ENCODE measurements at regions of chr4 and their contacts with region 1.

Region 1: DNA sequence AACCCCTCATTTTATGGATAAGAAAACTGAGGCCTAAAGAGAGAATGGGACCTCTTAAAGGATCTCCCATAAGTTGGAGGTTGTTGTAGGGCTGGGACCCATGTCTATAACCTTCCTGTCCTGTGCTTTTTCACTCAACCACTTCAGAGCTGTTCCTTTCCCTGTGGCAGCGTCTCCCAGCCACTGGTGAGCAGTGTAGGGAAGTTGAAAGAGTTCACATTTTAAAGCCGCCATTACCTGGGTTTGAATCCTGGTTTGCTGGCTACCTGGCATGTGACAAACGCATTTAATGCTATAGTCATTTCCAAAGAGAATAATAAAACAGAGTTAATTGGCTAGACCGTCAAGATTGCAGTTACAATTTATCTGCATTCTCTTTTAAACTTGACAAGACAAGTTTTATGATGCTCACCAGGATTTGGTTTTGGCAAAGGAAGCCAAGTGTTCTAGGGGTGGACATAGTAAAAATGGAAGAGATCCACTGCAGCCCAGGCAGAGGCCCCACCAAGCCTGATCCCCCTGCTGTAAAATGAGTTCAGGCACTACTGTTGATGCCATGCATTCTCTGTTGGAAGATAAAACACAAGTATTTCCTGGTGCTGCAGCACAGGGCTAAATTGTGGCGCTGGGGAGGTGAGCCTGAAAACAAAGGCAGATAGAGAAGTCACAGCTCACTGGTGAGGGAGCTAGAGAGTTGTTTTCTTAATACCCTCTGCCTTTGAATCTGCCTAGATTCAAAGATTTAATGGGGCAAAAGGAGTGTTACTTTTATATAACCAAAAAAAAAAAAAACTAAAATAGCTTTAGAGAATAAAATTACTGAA is 218.7 kb downstream of the NWD2 start:
- DNase-seq: no peak
- ATAC-seq: no peak
- H3K4me3 ChIP-seq: no peak overlapping the region
- H3K27ac ChIP-seq: no peak overlapping the region
- H3K4me1 ChIP-seq: peaks cover 40% of the 10 kb centered on the region
- H3K27me3 ChIP-seq: no peaks in the 10 kb centered on the region
- CTCF ChIP-seq: no peak
- POLR2A ChIP-seq: no peak

Region 2: DNA sequence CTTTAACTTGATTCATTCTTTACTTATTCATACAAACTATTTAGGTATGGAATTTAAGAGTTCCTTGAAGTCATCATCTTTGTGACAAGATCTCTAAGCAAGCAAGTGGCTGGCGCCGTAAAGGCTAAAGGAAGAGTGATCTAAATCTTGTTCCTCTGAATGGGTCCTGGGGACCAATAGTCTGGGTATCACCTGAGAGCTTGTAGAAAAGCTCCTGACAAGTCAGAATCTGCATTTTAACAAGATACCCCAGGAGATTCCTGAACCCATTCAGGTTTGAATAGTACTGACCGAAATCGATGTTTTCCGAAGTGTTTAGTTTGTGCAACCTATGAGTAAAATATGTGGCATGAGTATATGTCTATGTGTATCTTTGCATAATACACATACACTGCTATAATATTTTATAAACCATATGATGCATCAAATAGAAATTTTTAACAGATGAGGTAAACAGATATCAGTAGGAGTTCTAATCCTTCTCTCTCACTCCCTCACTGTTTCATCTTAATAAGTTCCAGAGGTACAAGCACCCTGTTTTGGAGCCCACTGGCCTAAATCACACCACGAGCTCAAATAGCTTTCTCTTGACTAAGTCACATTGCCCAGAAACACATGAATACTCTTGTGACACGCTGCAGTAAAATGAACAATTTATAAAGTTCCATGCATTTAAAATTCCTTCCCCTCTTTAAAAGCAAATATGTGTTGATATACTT is 53.0 kb after region 1 on chr4:
- intact Hi-C with region 1: loop called (anchors 10 kb)
- DNase-seq: no peak
- ATAC-seq: no peak
- H3K4me3 ChIP-seq: no peak overlapping the region
- H3K27ac ChIP-seq: no peak overlapping the region
- H3K4me1 ChIP-seq: no peaks in the 10 kb centered on the region
- H3K27me3 ChIP-seq: no peaks in the 10 kb centered on the region
- CTCF ChIP-seq: no peak
- POLR2A ChIP-seq: no peak